Ascending aorta (tissue), 2 donors: ENCODE measurements at regions of chr10 and their contacts with region 1.

Region 1: GRCh38 chr10:104045151-104046089 is 40.3 kb downstream of the COL17A1 start:
- DNase-seq: peak in 1 of 2 donors; percentile 76
- H3K4me3 ChIP-seq: no peak overlapping the region
- H3K27ac ChIP-seq: no peak overlapping the region
- H3K4me1 ChIP-seq: no peaks in the 10 kb centered on the region
- H3K27me3 ChIP-seq: no peaks in the 10 kb centered on the region
- CTCF ChIP-seq: peak; percentile 38 to 60 (median 42)

Region 2: DNA sequence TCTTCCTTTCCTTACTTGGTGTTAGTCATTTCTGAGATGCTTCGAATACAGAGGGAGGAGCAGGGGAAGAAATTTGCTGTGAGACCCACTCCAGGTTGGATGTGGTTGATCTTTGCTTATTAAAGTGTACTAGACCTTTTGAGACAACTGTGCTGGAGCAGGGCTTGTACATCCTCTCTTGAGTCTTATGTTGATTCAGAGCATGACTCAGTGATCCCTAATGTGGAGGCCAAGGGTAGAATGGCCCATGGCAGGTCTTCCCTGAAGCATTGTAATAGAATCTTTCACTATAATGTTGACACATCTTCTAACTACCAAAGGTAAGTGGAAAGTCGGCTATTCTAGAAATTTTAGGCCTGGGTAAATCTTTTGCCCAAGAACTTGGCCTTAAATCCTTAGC is 59.5 kb after region 1 on chr10:
- intact Hi-C with region 1: no loop called
- DNase-seq: no peak
- H3K4me3 ChIP-seq: no peak overlapping the region
- H3K27ac ChIP-seq: no peak overlapping the region
- H3K4me1 ChIP-seq: peaks cover 0 to 8% of the 10 kb centered on the region in 2 donors
- H3K27me3 ChIP-seq: no peaks in the 10 kb centered on the region
- CTCF ChIP-seq: no peak

Region 3: GRCh38 chr10:104209575-104210198 is 164.3 kb after region 1 on chr10:
- intact Hi-C with region 1: loop called (anchors 1 kb)
- DNase-seq: no peak
- H3K4me3 ChIP-seq: no peak overlapping the region
- H3K27ac ChIP-seq: no peak overlapping the region
- H3K4me1 ChIP-seq: no peaks in the 10 kb centered on the region
- H3K27me3 ChIP-seq: no peaks in the 10 kb centered on the region
- CTCF ChIP-seq: peak; percentile 16 to 61 (median 29)